Natural killer cell (primary cell): ENCODE measurements at regions of chrX and their contacts with region 1.

Region 1: DNA sequence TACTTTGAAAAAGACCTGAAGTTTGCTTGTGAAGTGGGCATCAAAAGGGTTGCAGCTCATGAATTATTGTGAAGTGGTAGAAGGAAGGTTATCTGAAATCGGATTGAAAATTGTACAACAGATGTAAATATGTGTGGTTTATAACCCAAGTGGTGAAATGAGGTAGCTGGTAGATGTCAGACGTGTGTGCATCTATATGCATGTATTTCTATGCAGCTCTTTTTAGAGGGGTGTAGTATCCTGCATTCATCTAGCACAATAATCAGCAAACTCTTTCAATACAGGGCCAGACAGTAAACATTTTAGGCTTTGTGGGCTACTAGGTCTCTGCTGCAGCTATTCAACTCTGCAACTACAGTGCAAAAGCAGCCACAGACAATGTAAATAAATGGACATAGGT is 9.4 kb downstream of the ATRX start:
- DNase-seq: no peak
- ATAC-seq: peak in 1 of 3 donors; percentile 45
- H3K4me3 ChIP-seq: no peak overlapping the region
- H3K4me3 Mint-ChIP-seq: no peak overlapping the region
- H3K27ac ChIP-seq: no peak overlapping the region
- H3K27ac Mint-ChIP-seq: peak overlapping the region in 1 of 2 donors; percentile 3
- H3K4me1 ChIP-seq: peaks cover 9% of the 10 kb centered on the region
- H3K4me1 Mint-ChIP-seq: peaks cover 17 to 24% of the 10 kb centered on the region in 2 donors
- H3K27me3 ChIP-seq: no peaks in the 10 kb centered on the region
- H3K27me3 Mint-ChIP-seq: no peaks in the 10 kb centered on the region
- CTCF ChIP-seq: no peak

Region 2: DNA sequence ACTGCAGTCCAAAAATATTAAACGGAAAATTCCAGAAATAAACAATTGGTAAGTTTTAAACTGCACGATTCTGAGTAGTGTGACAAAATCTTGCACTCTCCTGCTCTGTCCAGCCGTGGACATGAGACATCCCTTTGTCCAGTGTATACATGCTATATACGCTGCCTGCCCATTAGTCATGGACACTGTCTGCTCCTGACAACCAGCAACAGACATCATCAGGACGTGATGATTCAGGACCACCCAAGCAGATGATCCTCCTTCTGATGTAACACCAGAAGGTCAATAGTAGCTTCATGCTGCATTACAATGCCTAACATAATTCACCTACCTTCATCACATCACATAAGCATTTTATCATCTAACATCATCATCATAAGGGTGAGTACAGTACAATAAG is 27.0 kb before region 1 on chrX:
- intact Hi-C with region 1: loop called (anchors 2 kb)
- DNase-seq: no peak
- ATAC-seq: no peak
- H3K4me3 ChIP-seq: no peak overlapping the region
- H3K4me3 Mint-ChIP-seq: no peak overlapping the region
- H3K27ac ChIP-seq: no peak overlapping the region
- H3K27ac Mint-ChIP-seq: no peak overlapping the region
- H3K4me1 ChIP-seq: peaks cover 3% of the 10 kb centered on the region
- H3K4me1 Mint-ChIP-seq: peaks cover 21 to 45% of the 10 kb centered on the region in 2 donors
- H3K27me3 ChIP-seq: no peaks in the 10 kb centered on the region
- H3K27me3 Mint-ChIP-seq: no peaks in the 10 kb centered on the region
- CTCF ChIP-seq: no peak